Activated CD8-positive, alpha-beta memory T cell treated with anti-CD3 and anti-CD28 coated beads, Interleukin-2, amount 10 ng/mL, durations not matched to agents 7 days and 5 days (primary cell): ENCODE measurements at regions of chr14 and their contacts with region 1.

Region 1: DNA sequence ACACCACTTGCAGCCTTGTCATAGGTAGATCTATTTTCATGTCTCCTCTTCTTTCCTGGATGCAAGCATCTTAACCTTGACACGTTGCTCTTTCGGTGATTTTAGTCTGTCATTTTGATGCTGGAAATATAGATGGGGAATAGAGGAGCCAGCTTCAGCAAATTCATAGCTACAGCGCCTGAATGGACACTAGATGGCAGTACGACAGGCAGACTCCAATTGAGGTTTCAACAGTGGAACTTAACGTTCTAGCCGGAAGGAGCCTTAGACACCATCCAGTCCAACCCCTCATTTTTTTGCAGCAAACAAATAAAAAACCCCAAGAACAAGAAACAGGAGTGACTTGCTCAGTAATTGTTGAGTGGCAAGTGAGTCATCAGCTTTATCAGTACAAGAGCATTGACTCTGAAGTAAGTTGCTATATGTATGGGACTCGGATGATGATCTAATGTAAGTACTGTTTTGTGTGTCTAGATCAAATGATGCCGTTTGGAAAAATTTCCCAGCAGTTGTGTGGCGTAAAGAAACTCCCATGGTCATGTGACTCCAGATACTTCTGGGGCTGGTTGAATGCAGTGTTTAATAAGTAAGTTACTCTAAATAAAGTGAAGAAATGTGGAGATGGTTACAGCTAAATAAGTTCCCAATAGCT is 9.0 kb downstream of the DMAC2L start:
- DNase-seq: peak; percentile 84
- ATAC-seq: peak; percentile 96
- H3K4me3 Mint-ChIP-seq: no peak overlapping the region
- H3K27ac Mint-ChIP-seq: no peak overlapping the region
- H3K4me1 Mint-ChIP-seq: peaks cover 33% of the 10 kb centered on the region
- H3K27me3 Mint-ChIP-seq: no peaks in the 10 kb centered on the region

Region 2: DNA sequence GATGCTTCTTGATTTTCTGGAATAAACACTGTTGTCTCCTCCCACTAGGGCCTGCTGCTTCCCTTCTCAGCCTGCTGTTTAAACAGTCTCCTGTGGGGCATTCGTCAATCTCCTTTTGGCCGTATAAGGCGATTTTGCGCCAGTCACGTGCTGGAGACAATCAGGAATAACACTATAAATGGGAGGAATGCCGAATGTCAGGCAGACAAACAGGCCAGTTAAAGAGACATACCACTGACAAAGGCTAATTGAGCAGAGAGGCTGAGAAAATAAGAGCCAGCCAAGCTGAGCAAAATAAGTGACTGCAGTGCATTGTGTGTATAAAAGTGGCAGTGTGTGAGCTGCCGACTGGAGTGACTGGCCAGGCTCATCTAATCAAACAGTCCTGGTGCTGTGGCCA is 14.3 kb after region 1 on chr14:
- CTCF ChIA-PET with region 1: interaction called, 11 read pairs
- DNase-seq: no peak
- ATAC-seq: no peak
- H3K4me3 Mint-ChIP-seq: no peak overlapping the region
- H3K27ac Mint-ChIP-seq: peak overlapping the region; percentile 41
- H3K4me1 Mint-ChIP-seq: peaks cover 11% of the 10 kb centered on the region
- H3K27me3 Mint-ChIP-seq: no peaks in the 10 kb centered on the region

Region 3: GRCh38 chr14:50363714-50364111 is 42.6 kb after region 1 on chr14:
- CTCF ChIA-PET with region 1: interaction called, 18 read pairs
- DNase-seq: peak; percentile 82
- ATAC-seq: peak; percentile 93
- H3K4me3 Mint-ChIP-seq: peak overlapping the region; percentile 92
- H3K27ac Mint-ChIP-seq: peak overlapping the region; percentile 97
- H3K4me1 Mint-ChIP-seq: peaks cover 31% of the 10 kb centered on the region
- H3K27me3 Mint-ChIP-seq: no peaks in the 10 kb centered on the region

Region 4: GRCh38 chr14:50396631-50397390 is 75.7 kb after region 1 on chr14 and contains the start of gene CDKL1:
- CTCF ChIA-PET with region 1: interaction called, 14 read pairs
- DNase-seq: peak; percentile 58
- ATAC-seq: peak; percentile 84
- H3K4me3 Mint-ChIP-seq: peak within 1 kb of the TSS; percentile 85
- H3K27ac Mint-ChIP-seq: peak within 1 kb of the TSS; percentile 56
- H3K4me1 Mint-ChIP-seq: peaks cover 15% of the 10 kb centered on the region
- H3K27me3 Mint-ChIP-seq: peaks cover 6% of the 10 kb centered on the region
- total RNA-seq, gene CDKL1: 13.5 to 17.6 TPM

Region 5: GRCh38 chr14:50532502-50533240 is 211.5 kb after region 1 on chr14 and contains the start of gene MAP4K5:
- CTCF ChIA-PET with region 1: interaction called, 20 read pairs
- DNase-seq: peak; percentile 92
- ATAC-seq: peak; percentile 97
- H3K4me3 Mint-ChIP-seq: peak within 1 kb of the TSS; percentile 88
- H3K27ac Mint-ChIP-seq: peak within 1 kb of the TSS; percentile 83
- H3K4me1 Mint-ChIP-seq: peaks cover 42% of the 10 kb centered on the region
- H3K27me3 Mint-ChIP-seq: peaks cover 7% of the 10 kb centered on the region
- total RNA-seq, gene MAP4K5: 31.4 to 38.7 TPM